K562 (cell line): ENCODE measurements at regions of chr18 and their contacts with region 1.

Region 1: DNA sequence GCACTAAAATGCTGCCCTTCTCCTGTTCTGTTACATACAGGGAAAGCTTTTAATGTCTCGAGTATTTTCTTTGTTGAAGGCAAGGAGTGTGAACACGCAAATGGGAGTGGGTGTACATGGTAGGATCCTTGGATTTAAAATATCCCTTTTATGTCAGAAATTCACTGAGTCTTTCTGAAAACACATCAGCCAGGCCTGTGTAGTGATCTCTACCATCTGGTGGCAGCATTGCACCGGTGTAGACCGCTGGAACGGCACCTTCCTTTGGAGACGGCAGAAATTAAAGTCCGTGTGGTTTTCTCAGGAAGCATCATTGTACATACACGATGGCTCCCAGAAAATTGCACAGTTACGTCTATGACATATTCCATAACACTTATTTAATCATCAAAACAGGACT is 515.8 kb downstream of the GALR1 start:
- DNase-seq: peak in 3 of 4 experiments; percentile 8 to 47 (median 19)
- ATAC-seq: peak; percentile 81
- H3K4me3 ChIP-seq: no peak overlapping the region
- H3K27ac ChIP-seq: no peak overlapping the region
- H3K4me1 ChIP-seq: no peaks in the 10 kb centered on the region
- H3K27me3 ChIP-seq: no peaks in the 10 kb centered on the region
- CTCF ChIP-seq: peak; percentile 47 to 60 (median 57)
- EP300 ChIP-seq: no peak
- POLR2A ChIP-seq: no peak
- RAD21 ChIP-seq: peak; percentile 37 to 66

Region 2: GRCh38 chr18:77894060-77894459 is 128.6 kb after region 1 on chr18:
- CTCF ChIA-PET with region 1: no interaction called
- POLR2A ChIA-PET with region 1: no interaction called
- in situ Hi-C with region 1: no loop called
- intact Hi-C with region 1: loop called (anchors 5 kb)
- DNase-seq: no peak
- ATAC-seq: no peak
- H3K4me3 ChIP-seq: no peak overlapping the region
- H3K27ac ChIP-seq: no peak overlapping the region
- H3K4me1 ChIP-seq: no peaks in the 10 kb centered on the region
- H3K27me3 ChIP-seq: peaks cover 3 to 4% of the 10 kb centered on the region in 2 experiments; a peak in 2 of 5 replicates
- CTCF ChIP-seq: no peak
- EP300 ChIP-seq: no peak
- POLR2A ChIP-seq: no peak
- RAD21 ChIP-seq: no peak

Region 3: DNA sequence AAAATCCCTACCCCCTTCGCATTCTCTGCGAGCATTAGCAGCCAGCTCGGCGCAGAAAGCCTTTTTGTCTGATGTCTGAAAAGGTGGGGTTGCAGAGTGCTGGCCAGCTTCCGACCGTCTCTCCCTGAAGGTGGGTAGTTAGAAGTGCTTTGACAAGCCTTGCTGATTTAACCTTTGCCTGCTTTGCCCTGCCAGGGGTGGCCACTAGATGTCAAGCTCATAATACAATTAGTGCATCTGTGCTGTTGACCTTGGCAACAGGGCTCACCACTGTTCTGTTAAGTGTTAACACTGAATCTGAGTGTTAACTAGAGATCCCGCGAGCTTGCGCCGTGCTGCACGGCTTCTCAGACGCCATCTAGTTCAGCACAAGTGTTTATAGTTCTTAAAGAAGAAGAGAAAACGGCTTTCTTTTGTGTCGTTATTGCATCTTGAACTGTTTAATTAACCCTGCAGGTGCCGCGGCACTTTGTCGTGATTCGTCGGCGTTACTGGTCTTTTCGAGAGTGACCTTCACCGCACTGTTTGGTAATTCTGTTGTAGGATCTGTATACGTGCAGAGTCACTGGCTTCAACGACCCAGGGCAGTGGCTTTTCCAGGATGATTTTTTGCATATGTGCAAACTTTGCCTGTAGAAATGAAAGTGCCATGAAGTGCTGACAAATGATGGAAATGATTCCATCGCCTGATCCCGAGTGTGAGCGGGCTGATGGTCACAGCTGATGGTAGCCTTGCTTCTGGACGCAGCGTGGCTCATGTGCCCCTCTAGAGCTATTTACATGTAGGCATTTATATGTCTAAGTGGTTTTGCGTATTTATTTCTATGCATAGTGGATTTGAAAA is 1219.7 kb after region 1 on chr18:
- CTCF ChIA-PET with region 1: no interaction called
- POLR2A ChIA-PET with region 1: no interaction called
- in situ Hi-C with region 1: no loop called
- intact Hi-C with region 1: loop called (anchors 5 kb)
- DNase-seq: peak in 1 of 4 experiments; percentile 4
- ATAC-seq: peak; percentile 43; the same call in 1 of the 3 replicates
- H3K4me3 ChIP-seq: no peak overlapping the region
- H3K27ac ChIP-seq: no peak overlapping the region
- H3K4me1 ChIP-seq: no peaks in the 10 kb centered on the region; a peak in 1 of 5 replicates
- H3K27me3 ChIP-seq: peaks cover 6 to 11% of the 10 kb centered on the region in 2 experiments; a peak in 4 of 5 replicates
- CTCF ChIP-seq: peak in 2 of 3 experiments; percentile 31 to 50; a peak in 3 of 6 replicates
- EP300 ChIP-seq: no peak
- POLR2A ChIP-seq: no peak
- RAD21 ChIP-seq: peak in 1 of 2 experiments; percentile 29; a peak in 1 of 4 replicates